ENCODE measurements at regions of chr20 and their contacts with region 1.

Region 1: GRCh38 chr20:50750145-50750671 is 18.8 kb downstream of the PARD6B start:
- DNase-seq: no peak
- H3K4me3 Mint-ChIP-seq: no peak overlapping the region
- H3K27ac Mint-ChIP-seq: no peak overlapping the region
- H3K4me1 Mint-ChIP-seq: no peaks in the 10 kb centered on the region
- H3K27me3 Mint-ChIP-seq: no peaks in the 10 kb centered on the region
- CTCF ChIP-seq: no peak

Region 2: DNA sequence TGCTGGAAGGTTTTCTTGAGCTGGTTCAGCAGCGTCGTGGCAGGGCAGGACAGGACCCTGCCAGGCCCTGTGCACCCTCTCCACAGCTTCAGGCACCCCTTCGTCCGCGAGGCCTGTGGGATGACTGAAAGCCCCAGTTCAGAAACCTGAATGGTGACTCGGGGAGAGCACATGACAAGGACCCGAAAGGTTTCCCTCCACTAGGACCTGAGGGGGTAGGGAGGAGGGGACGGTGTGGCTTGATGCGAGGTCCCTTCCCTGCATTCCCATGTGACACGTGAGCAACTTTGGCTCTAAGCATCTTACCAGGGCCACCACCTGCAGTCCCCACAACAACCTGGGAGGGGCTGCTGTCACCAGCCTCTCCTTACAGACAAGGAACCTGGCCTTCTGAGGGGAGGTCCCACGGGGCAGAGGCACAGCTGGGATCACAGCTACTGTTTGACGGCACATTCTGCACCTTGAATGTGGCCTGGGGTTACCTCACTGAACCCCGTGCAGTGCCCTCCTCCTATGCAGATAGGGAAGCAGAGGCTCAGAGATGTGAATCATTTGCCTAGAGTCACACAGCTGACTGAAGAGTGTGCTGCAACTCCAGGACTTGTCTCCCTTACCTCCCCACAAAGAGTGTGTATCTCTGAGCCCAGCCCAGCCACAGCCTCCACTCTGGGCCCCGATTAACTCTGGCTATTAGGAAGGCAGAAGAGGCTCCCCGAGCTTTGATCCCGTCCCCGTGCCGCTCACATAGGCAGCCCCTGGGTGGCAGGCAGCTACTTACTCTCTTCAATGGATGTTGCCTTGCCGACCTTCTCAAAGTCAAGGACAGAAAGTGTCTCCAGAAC is 155.4 kb before region 1 on chr20:
- CTCF ChIA-PET with region 1: interaction called, 13 read pairs
- POLR2A ChIA-PET with region 1: interaction called, 6 read pairs
- intact Hi-C with region 1: no loop called
- DNase-seq: no peak
- H3K4me3 Mint-ChIP-seq: no peak overlapping the region
- H3K27ac Mint-ChIP-seq: no peak overlapping the region
- H3K4me1 Mint-ChIP-seq: no peaks in the 10 kb centered on the region
- H3K27me3 Mint-ChIP-seq: no peaks in the 10 kb centered on the region
- CTCF ChIP-seq: no peak

Region 3: GRCh38 chr20:50663095-50663850 is 86.9 kb before region 1 on chr20:
- CTCF ChIA-PET with region 1: interaction called, 71 read pairs
- POLR2A ChIA-PET with region 1: interaction called, 31 read pairs
- intact Hi-C with region 1: loop called (anchors 1 kb)
- DNase-seq: peak; percentile 84
- H3K4me3 Mint-ChIP-seq: no peak overlapping the region
- H3K27ac Mint-ChIP-seq: peak overlapping the region; percentile 53
- H3K4me1 Mint-ChIP-seq: peaks cover 21% of the 10 kb centered on the region
- H3K27me3 Mint-ChIP-seq: no peaks in the 10 kb centered on the region
- CTCF ChIP-seq: peak; percentile 60

Region 4: GRCh38 chr20:50668326-50668725 is 81.9 kb before region 1 on chr20:
- CTCF ChIA-PET with region 1: interaction called, 71 read pairs
- POLR2A ChIA-PET with region 1: interaction called, 31 read pairs
- intact Hi-C with region 1: loop called (anchors 1 kb)
- DNase-seq: no peak
- H3K4me3 Mint-ChIP-seq: no peak overlapping the region
- H3K27ac Mint-ChIP-seq: no peak overlapping the region
- H3K4me1 Mint-ChIP-seq: peaks cover 5% of the 10 kb centered on the region
- H3K27me3 Mint-ChIP-seq: no peaks in the 10 kb centered on the region
- CTCF ChIP-seq: no peak

Region 5: GRCh38 chr20:50724851-50725721 is 25.1 kb before region 1 on chr20:
- CTCF ChIA-PET with region 1: interaction called, 21 read pairs
- POLR2A ChIA-PET with region 1: interaction called, 168 read pairs
- intact Hi-C with region 1: no loop called
- DNase-seq: peak; percentile 96
- H3K4me3 Mint-ChIP-seq: no peak overlapping the region
- H3K27ac Mint-ChIP-seq: no peak overlapping the region
- H3K4me1 Mint-ChIP-seq: peaks cover 22% of the 10 kb centered on the region
- H3K27me3 Mint-ChIP-seq: no peaks in the 10 kb centered on the region
- CTCF ChIP-seq: no peak

Region 6: GRCh38 chr20:50762435-50763201 is 12.4 kb after region 1 on chr20:
- CTCF ChIA-PET with region 1: interaction called, 32 read pairs
- POLR2A ChIA-PET with region 1: interaction called, 21 read pairs
- intact Hi-C with region 1: no loop called
- DNase-seq: peak; percentile 94
- H3K4me3 Mint-ChIP-seq: peak overlapping the region; percentile 61
- H3K27ac Mint-ChIP-seq: peak overlapping the region; percentile 89
- H3K4me1 Mint-ChIP-seq: peaks cover 27% of the 10 kb centered on the region
- H3K27me3 Mint-ChIP-seq: no peaks in the 10 kb centered on the region
- CTCF ChIP-seq: no peak